Activated CD4-positive, alpha-beta T cell treated with anti-CD3 and anti-CD28 coated beads for 36 hours (primary cell): ENCODE measurements at regions of chr21 and their contacts with region 1.

Region 1: DNA sequence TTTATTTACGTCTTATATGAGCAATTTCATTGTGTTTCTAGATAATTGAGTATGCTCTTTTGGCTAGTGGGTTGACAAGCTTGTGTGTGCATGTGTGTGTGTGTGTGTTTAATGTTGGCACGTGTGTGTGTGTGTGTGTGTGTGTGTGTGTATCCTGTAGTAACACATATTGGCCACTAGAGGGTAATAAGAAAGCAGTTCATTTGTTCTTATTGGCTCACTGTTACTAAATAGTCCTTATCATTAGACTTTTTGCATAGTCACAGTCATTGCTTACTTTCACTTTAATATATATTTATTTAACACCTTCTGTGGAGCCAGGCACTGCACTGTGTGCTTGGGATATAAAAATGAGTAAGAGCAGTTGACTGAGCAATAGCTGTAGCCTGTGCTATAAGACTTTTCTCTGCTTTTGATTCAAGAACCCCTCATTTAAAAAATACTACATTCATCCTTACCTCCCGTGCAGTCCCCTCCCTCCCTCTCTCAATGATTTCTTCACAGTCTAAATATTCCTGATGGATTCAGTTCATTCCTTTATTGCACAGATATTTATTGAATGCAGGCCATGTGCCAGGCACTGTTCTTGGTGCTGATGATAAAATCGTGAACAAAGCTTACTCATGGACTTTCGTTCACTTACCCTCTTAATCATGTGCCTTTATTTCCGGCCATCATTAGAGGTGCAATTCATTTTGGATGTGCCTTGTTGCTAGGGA is 96.7 kb downstream of the DYRK1A start:
- DNase-seq: peak; percentile 23
- ATAC-seq: peak; percentile 55
- H3K4me3 Mint-ChIP-seq: no peak overlapping the region
- H3K27ac Mint-ChIP-seq: peak overlapping the region; percentile 71
- H3K4me1 Mint-ChIP-seq: peaks cover 70% of the 10 kb centered on the region
- H3K27me3 Mint-ChIP-seq: no peaks in the 10 kb centered on the region

Region 2: GRCh38 chr21:37267269-37268184 is 195.7 kb before region 1 on chr21 and contains the start of gene VPS26C:
- CTCF ChIA-PET with region 1: no interaction called
- POLR2A ChIA-PET with region 1: no interaction called
- intact Hi-C with region 1: loop called (anchors 1 to 10 kb)
- DNase-seq: peak; percentile 99
- ATAC-seq: peak; percentile 92
- H3K4me3 Mint-ChIP-seq: peak within 1 kb of the TSS; percentile 84
- H3K27ac Mint-ChIP-seq: peak within 1 kb of the TSS; percentile 99
- H3K4me1 Mint-ChIP-seq: peaks cover 28% of the 10 kb centered on the region
- H3K27me3 Mint-ChIP-seq: no peaks in the 10 kb centered on the region
- total RNA-seq, gene VPS26C: 54.8 to 61.7 TPM

Region 3: GRCh38 chr21:37319551-37319950 is 143.7 kb before region 1 on chr21:
- CTCF ChIA-PET with region 1: no interaction called
- POLR2A ChIA-PET with region 1: no interaction called
- intact Hi-C with region 1: no loop called
- DNase-seq: no peak
- ATAC-seq: no peak
- H3K4me3 Mint-ChIP-seq: no peak overlapping the region
- H3K27ac Mint-ChIP-seq: no peak overlapping the region
- H3K4me1 Mint-ChIP-seq: no peaks in the 10 kb centered on the region
- H3K27me3 Mint-ChIP-seq: peaks cover 2% of the 10 kb centered on the region

Region 4: GRCh38 chr21:37380349-37381323 is 82.6 kb before region 1 on chr21:
- CTCF ChIA-PET with region 1: interaction called, 11 read pairs
- POLR2A ChIA-PET with region 1: no interaction called
- intact Hi-C with region 1: no loop called
- DNase-seq: no peak
- ATAC-seq: no peak
- H3K4me3 Mint-ChIP-seq: no peak overlapping the region
- H3K27ac Mint-ChIP-seq: peak overlapping the region; percentile 25
- H3K4me1 Mint-ChIP-seq: peaks cover 85% of the 10 kb centered on the region
- H3K27me3 Mint-ChIP-seq: no peaks in the 10 kb centered on the region

Region 5: GRCh38 chr21:37445228-37445627 is 18.0 kb before region 1 on chr21:
- CTCF ChIA-PET with region 1: interaction called, 5 read pairs
- POLR2A ChIA-PET with region 1: no interaction called
- intact Hi-C with region 1: loop called in 1 of 2 experiments (anchors 2 kb)
- DNase-seq: no peak
- ATAC-seq: no peak
- H3K4me3 Mint-ChIP-seq: no peak overlapping the region
- H3K27ac Mint-ChIP-seq: peak overlapping the region; percentile 28
- H3K4me1 Mint-ChIP-seq: peaks cover 83% of the 10 kb centered on the region
- H3K27me3 Mint-ChIP-seq: no peaks in the 10 kb centered on the region

Region 6: GRCh38 chr21:37642493-37642892 is 179.3 kb after region 1 on chr21:
- CTCF ChIA-PET with region 1: interaction called, 4 read pairs
- POLR2A ChIA-PET with region 1: no interaction called
- intact Hi-C with region 1: loop called in 1 of 2 experiments (anchors 5 kb)
- DNase-seq: peak; percentile 63
- ATAC-seq: peak; percentile 78
- H3K4me3 Mint-ChIP-seq: no peak overlapping the region
- H3K27ac Mint-ChIP-seq: no peak overlapping the region
- H3K4me1 Mint-ChIP-seq: no peaks in the 10 kb centered on the region
- H3K27me3 Mint-ChIP-seq: peaks cover 34% of the 10 kb centered on the region